IMR-90 (cell line): ENCODE measurements at regions of chr4 and their contacts with region 1.

Region 1: GRCh38 chr4:141455651-141456050 is 180.7 kb upstream of the IL15 start:
- DNase-seq: peak; percentile 22
- ATAC-seq: peak; percentile 53
- H3K4me3 ChIP-seq: no peak overlapping the region
- H3K27ac ChIP-seq: no peak overlapping the region
- H3K4me1 ChIP-seq: peaks cover 2% of the 10 kb centered on the region; the same call in 1 of the 2 replicates
- H3K27me3 ChIP-seq: no peaks in the 10 kb centered on the region
- CTCF ChIP-seq: no peak
- POLR2A ChIP-seq: no peak
- RAD21 ChIP-seq: no peak

Region 2: GRCh38 chr4:141329174-141329569 is 126.5 kb before region 1 on chr4:
- CTCF ChIA-PET with region 1: no interaction called
- POLR2A ChIA-PET with region 1: no interaction called
- dilution Hi-C with region 1: no loop called
- in situ Hi-C with region 1: no loop called
- intact Hi-C with region 1: no loop called
- DNase-seq: peak; percentile 80
- ATAC-seq: peak; percentile 61
- H3K4me3 ChIP-seq: no peak overlapping the region
- H3K27ac ChIP-seq: peak overlapping the region; percentile 17; the same call in 1 of the 2 replicates
- H3K4me1 ChIP-seq: peaks cover 13% of the 10 kb centered on the region
- H3K27me3 ChIP-seq: no peaks in the 10 kb centered on the region
- CTCF ChIP-seq: no peak
- POLR2A ChIP-seq: no peak
- RAD21 ChIP-seq: no peak

Region 3: GRCh38 chr4:141435446-141436225 is 20.0 kb before region 1 on chr4:
- CTCF ChIA-PET with region 1: interaction called, 10 read pairs
- POLR2A ChIA-PET with region 1: no interaction called
- dilution Hi-C with region 1: no loop called
- in situ Hi-C with region 1: no loop called
- intact Hi-C with region 1: no loop called
- DNase-seq: no peak
- ATAC-seq: 0 out of 2 replicates have a peak, but pooled peaks have one; percentile 35
- H3K4me3 ChIP-seq: no peak overlapping the region
- H3K27ac ChIP-seq: no peak overlapping the region
- H3K4me1 ChIP-seq: peaks cover 7% of the 10 kb centered on the region
- H3K27me3 ChIP-seq: no peaks in the 10 kb centered on the region
- CTCF ChIP-seq: no peak
- POLR2A ChIP-seq: no peak
- RAD21 ChIP-seq: no peak

Region 4: DNA sequence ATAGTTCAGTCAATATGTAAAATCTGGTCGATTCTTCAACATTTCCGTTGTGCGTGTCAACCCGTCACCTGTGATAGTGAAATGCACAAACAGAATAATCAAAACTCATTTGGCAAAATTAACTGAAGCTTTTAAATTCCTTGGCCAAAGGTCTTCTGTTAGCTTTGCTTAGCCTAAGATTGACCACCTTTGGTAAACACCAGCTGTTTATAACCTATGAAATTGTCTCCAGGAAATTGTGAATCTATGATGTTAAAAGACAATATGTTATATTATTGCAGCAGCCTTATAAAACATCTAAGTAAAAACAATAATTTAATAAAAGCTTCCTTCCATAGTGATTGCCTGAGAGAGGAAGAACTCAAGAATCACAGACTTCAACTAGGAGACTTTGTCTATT is 377.6 kb after region 1 on chr4:
- CTCF ChIA-PET with region 1: no interaction called
- POLR2A ChIA-PET with region 1: no interaction called
- dilution Hi-C with region 1: no loop called
- in situ Hi-C with region 1: no loop called
- intact Hi-C with region 1: no loop called
- DNase-seq: no peak
- ATAC-seq: no peak
- H3K4me3 ChIP-seq: no peak overlapping the region
- H3K27ac ChIP-seq: no peak overlapping the region
- H3K4me1 ChIP-seq: no peaks in the 10 kb centered on the region
- H3K27me3 ChIP-seq: no peaks in the 10 kb centered on the region
- CTCF ChIP-seq: no peak
- POLR2A ChIP-seq: no peak
- RAD21 ChIP-seq: no peak